Activated CD4-positive, alpha-beta T cell treated with anti-CD3 and anti-CD28 coated beads, Interleukin-2, amount 10 ng/mL, durations not matched to agents 24 days and 14 days (primary cell): ENCODE measurements at regions of chr3 and their contacts with region 1.

Region 1: DNA sequence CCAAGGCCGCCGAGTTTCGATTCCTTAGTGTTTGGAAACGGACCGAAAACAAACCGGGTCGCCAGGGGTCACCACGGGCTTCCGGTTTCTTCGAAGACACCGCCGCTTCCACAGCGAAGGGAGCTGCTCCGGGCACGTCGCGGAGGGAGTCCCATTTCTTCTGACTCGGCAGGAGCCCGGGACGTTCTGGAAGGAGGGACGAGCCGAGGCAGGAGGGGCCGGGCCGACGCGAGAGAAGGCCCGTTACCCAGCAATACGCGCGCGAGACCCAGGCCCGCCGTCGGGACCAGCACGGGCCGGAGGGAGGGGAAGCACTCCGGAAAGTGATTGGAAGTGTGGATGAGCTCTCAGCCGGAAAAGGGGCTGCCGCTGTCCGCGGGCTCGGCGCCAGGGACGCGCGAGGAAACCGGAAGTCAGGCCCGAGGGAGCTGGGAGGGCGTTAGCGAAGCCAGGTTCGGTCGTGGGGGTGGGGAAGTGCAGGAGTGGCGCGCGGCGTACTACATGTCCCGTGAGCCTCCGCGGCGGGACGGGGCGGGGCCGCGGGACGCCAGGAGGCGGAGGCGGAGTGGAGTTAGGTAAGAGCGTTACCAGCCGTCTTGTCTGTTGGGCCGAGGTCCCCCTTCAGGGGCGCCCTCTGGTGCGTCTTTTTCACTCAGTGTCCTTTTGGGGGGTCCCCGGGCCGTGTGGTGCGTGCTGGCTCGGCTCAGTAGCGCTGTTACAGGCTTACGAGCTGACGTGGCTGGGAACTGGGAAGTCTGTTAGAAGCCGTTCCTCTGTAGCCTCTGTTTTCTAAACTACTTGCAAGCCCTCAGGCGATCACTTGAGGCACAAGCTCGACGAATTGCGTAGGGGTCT is at the starts of genes AZI2 and ZCWPW2:
- DNase-seq: peak; percentile 98
- H3K4me3 Mint-ChIP-seq: peak within 1 kb of the TSS; percentile 98
- H3K27ac Mint-ChIP-seq: peak within 1 kb of the TSS; percentile 96
- H3K4me1 Mint-ChIP-seq: peaks cover 41% of the 10 kb centered on the region
- H3K27me3 Mint-ChIP-seq: no peaks in the 10 kb centered on the region
- total RNA-seq, gene AZI2: 35.6 and 38.7 TPM in 2 replicates
- total RNA-seq, gene ZCWPW2: 0.14 TPM in 1 of 2 replicates, not detected in the other

Region 2: GRCh38 chr3:27454914-27455313 is 893.9 kb before region 1 on chr3:
- intact Hi-C with region 1: loop called (anchors 10 kb)
- DNase-seq: no peak
- H3K4me3 Mint-ChIP-seq: peak overlapping the region; percentile 39
- H3K27ac Mint-ChIP-seq: peak overlapping the region; percentile 83
- H3K4me1 Mint-ChIP-seq: peaks cover 26% of the 10 kb centered on the region
- H3K27me3 Mint-ChIP-seq: no peaks in the 10 kb centered on the region

Region 3: DNA sequence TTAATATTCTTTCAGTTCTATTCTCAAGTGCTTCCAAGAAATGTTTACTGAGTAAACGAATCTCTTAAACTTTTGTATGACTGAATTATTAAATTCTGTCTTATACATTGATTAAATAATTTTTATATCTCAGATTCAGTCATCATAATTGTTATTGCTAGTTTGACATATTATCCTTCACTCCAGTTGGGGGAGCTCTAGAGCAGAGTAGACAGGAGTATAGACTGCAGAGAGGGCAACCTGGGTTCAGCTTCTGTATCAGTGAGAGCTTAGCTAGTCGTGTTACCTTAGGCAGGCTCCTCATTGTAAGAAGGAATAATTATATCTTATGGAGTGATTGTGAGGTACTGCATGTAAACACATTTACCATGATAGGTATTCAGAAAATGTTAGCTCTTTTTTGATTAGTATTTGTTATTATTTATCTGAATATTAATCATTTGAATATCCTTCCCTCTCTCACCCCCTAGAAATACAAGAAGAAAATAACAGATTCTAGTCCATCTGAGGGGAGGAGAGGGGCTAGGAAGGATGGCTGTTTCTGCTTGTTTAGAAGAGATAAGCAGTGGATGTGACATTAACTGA is 31.3 kb before region 1 on chr3:
- intact Hi-C with region 1: no loop called
- DNase-seq: peak; percentile 82
- H3K4me3 Mint-ChIP-seq: no peak overlapping the region
- H3K27ac Mint-ChIP-seq: no peak overlapping the region
- H3K4me1 Mint-ChIP-seq: peaks cover 14% of the 10 kb centered on the region
- H3K27me3 Mint-ChIP-seq: no peaks in the 10 kb centered on the region

Region 4: GRCh38 chr3:28601291-28601690 is 252.4 kb after region 1 on chr3:
- intact Hi-C with region 1: no loop called
- DNase-seq: no peak
- H3K4me3 Mint-ChIP-seq: no peak overlapping the region
- H3K27ac Mint-ChIP-seq: no peak overlapping the region
- H3K4me1 Mint-ChIP-seq: no peaks in the 10 kb centered on the region
- H3K27me3 Mint-ChIP-seq: no peaks in the 10 kb centered on the region